ENCODE measurements at regions of chr6 and their contacts with region 1.

Region 1: DNA sequence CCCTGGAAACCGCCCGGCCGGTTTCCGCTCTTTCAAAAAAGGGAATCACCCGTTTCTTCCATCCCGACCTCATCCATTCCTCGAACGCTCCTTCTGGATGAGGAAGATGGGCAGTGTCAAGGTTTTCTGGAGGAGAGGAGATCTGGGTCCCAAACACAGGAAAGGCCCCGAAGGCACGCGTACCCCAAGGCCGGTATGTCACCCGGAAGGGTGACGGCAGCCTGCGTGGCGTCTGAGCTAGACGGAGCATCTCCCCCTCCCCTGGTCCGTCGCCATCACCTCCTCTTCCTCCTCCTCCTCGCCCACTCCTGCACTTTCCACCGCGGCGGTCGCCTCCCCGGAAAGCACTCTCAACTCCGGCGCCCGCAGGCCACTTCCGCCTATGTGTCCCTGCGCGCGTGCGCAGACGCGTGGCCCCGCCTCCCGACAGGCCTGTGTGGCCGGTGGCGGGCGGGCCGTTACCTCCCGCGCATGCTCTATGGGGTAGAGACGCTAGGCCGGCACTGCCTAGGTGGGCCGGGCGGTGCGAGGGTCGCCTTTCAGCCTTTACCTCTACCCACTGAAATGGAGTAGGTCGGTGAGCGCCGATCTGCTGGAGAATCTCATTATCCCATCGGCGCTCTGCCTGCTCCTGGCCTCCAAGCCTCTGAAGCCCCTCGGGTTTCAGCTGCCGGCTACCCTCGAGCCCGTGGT is at the start of gene SLC35B3:
- H3K4me3 Mint-ChIP-seq: peak within 1 kb of the TSS; percentile 92
- H3K27ac Mint-ChIP-seq: peak within 1 kb of the TSS; percentile 97
- H3K4me1 Mint-ChIP-seq: peaks cover 28% of the 10 kb centered on the region
- H3K27me3 Mint-ChIP-seq: peaks cover 3% of the 10 kb centered on the region

Region 2: GRCh38 chr6:8102122-8102958 is 333.0 kb before region 1 on chr6 and contains the start of gene EEF1E1:
- intact Hi-C with region 1: loop called (anchors 10 kb)
- H3K4me3 Mint-ChIP-seq: peak within 1 kb of the TSS; percentile 96
- H3K27ac Mint-ChIP-seq: peak within 1 kb of the TSS; percentile 79
- H3K4me1 Mint-ChIP-seq: peaks cover 20% of the 10 kb centered on the region
- H3K27me3 Mint-ChIP-seq: peaks cover 1% of the 10 kb centered on the region

Region 3: DNA sequence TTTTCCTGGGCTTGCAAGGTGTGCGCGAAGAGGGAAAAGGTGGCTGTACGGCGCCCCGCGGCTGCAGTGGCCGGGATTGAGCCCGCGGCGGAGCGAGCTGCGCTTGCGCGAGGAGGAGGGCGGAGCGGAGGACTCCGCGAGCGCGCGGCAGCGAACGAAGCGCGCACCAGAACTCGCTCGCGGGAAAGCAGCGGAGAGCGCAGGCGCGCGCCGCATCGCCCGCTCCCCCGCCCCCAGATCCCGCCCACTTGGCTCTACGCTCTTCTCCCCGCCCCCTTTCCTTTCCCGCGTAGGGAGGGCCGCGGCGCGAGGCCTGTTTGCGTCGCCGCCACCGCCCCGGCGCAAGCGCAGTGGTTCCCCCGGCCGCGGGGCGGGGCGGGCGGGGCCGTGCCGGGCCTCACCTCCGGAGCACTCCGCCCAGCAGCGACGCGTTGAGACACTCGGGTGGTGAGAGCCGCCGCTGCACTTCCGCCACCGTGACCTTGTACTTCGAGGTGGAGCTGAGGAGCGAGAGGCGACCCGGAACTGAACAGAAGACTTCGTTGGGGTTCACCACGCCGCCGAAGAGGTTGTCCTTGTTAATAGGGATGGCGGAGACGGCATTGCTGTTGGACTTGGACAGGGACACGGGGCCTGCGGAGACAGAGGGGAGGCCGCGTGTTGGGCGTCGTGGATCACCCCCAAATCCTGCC is 1968.9 kb after region 1 on chr6:
- intact Hi-C with region 1: loop called (anchors 10 kb)
- H3K4me3 Mint-ChIP-seq: peak overlapping the region; percentile 78
- H3K27ac Mint-ChIP-seq: peak overlapping the region; percentile 77
- H3K4me1 Mint-ChIP-seq: peaks cover 10% of the 10 kb centered on the region
- H3K27me3 Mint-ChIP-seq: peaks cover 91% of the 10 kb centered on the region